ENCODE measurements at regions of chr10 and their contacts with region 1.

Region 1: GRCh38 chr10:122298598-122299301 is 27.7 kb downstream of the BTBD16 start:
- DNase-seq: peak; percentile 82
- H3K4me3 Mint-ChIP-seq: no peak overlapping the region
- H3K27ac Mint-ChIP-seq: no peak overlapping the region
- H3K4me1 Mint-ChIP-seq: peaks cover 3% of the 10 kb centered on the region
- H3K27me3 Mint-ChIP-seq: no peaks in the 10 kb centered on the region

Region 2: GRCh38 chr10:121804460-121804859 is 494.3 kb before region 1 on chr10:
- CTCF ChIA-PET with region 1: no interaction called
- intact Hi-C with region 1: no loop called
- DNase-seq: no peak
- H3K4me3 Mint-ChIP-seq: no peak overlapping the region
- H3K27ac Mint-ChIP-seq: no peak overlapping the region
- H3K4me1 Mint-ChIP-seq: no peaks in the 10 kb centered on the region
- H3K27me3 Mint-ChIP-seq: no peaks in the 10 kb centered on the region

Region 3: DNA sequence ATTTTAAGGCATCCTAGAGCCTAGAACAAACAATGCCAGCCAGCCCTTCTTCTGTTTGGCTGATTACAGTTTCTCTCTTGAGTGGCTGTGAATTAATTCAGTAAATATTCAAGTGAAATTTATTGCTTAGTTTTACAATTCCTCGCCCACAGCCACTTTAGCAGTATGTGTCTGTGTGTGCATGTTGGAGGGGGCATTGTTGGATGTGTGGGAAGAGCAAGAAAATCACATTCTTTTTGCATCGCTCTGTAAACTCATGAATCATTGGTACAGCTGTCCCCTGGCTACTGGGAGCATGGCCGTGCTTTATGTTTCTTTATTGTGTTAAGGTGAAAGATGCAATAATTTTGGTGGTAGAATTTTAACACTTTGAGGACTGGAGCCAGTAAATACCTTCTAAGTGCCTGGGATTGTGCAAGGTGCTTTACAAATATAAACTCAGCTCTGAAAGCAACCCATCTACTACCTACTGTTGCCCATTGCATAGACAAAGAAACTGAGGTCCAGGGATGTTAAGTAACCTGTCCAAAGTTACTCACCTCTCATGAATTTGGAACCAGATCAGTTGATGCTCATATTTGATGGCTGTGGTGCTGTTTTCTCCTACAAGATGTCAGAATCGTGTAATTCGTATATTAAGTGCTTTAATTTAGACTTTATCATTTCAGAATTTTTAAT is 117.6 kb before region 1 on chr10:
- CTCF ChIA-PET with region 1: no interaction called
- intact Hi-C with region 1: no loop called
- DNase-seq: no peak
- H3K4me3 Mint-ChIP-seq: no peak overlapping the region
- H3K27ac Mint-ChIP-seq: no peak overlapping the region
- H3K4me1 Mint-ChIP-seq: no peaks in the 10 kb centered on the region
- H3K27me3 Mint-ChIP-seq: no peaks in the 10 kb centered on the region

Region 4: GRCh38 chr10:122342293-122343134 is 43.8 kb after region 1 on chr10:
- CTCF ChIA-PET with region 1: interaction called, 7 read pairs
- intact Hi-C with region 1: loop called (anchors 1 kb)
- DNase-seq: peak; percentile 80
- H3K4me3 Mint-ChIP-seq: no peak overlapping the region
- H3K27ac Mint-ChIP-seq: peak overlapping the region; percentile 31
- H3K4me1 Mint-ChIP-seq: peaks cover 10% of the 10 kb centered on the region
- H3K27me3 Mint-ChIP-seq: no peaks in the 10 kb centered on the region

Region 5: DNA sequence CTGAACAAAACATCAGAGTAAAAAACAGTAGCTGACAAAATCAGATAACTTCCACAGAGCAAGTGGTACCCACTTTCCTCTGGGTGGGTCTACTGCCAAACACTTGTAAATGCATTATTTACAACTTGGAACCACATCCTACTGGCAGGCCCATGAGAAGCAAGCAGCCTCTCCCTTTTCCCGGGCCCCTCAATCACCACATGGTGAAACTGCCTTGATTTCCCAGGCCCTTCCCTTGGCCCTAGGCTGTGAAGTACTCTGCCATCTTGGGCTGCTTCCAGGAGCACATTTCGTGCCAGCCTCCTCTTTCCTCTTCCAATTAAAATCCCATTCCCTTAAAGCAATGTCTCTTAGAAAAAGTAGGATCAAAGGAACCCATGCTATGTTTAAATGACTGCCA is 475.5 kb after region 1 on chr10:
- CTCF ChIA-PET with region 1: no interaction called
- intact Hi-C with region 1: no loop called
- DNase-seq: no peak
- H3K4me3 Mint-ChIP-seq: no peak overlapping the region
- H3K27ac Mint-ChIP-seq: no peak overlapping the region
- H3K4me1 Mint-ChIP-seq: no peaks in the 10 kb centered on the region
- H3K27me3 Mint-ChIP-seq: peaks cover 11% of the 10 kb centered on the region